WTC11 (cell line): ENCODE measurements at regions of chr19 and their contacts with region 1.

Region 1: DNA sequence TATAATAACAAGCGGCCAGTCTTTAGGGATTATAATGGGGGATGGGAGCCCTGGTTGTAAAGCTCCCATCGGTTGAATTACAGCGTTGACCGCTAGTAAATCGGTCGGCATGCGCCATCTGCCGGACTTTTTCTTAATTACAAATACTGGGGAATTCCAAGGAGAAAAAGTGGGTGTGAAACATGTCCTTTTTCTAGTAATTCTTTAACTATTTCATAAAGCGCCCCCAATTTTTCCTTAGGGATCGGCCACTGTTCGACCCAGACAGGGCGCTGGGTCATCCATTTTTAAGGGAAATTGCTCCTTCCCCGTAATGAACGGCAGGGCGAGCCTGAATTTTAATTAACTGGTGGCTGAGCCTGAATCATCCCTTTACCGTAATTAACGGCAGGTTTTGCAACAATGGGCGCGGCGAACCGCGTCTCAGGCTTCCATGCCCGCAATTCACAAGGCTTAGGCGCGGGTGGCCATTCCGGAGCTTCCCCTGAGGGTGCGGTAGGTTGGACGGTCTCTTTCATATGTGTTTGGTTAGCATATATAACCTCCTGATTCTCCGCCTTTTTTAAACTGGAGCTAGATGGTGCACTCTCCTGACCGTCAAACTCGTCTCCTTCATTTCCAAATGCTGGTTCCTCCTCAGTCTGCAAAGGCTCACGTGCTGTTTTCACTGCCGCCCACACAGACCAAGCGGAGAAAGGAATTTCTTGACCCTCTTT is 30.2 kb upstream of the EVI5L start:
- DNase-seq: peak; percentile 81
- ATAC-seq: peak; percentile 72
- H3K4me3 Mint-ChIP-seq: peak overlapping the region; percentile 64
- H3K27ac Mint-ChIP-seq: no peak overlapping the region
- H3K4me1 Mint-ChIP-seq: peaks cover 21% of the 10 kb centered on the region
- H3K27me3 Mint-ChIP-seq: peaks cover 35% of the 10 kb centered on the region
- CTCF ChIP-seq: peak; percentile 57

Region 2: GRCh38 chr19:7355151-7355820 is 444.5 kb before region 1 on chr19:
- CTCF ChIA-PET with region 1: interaction called, 16 read pairs
- POLR2A ChIA-PET with region 1: interaction called, 4 read pairs
- DNase-seq: no peak
- ATAC-seq: no peak
- H3K4me3 Mint-ChIP-seq: no peak overlapping the region
- H3K27ac Mint-ChIP-seq: no peak overlapping the region
- H3K4me1 Mint-ChIP-seq: no peaks in the 10 kb centered on the region
- H3K27me3 Mint-ChIP-seq: peaks cover 21% of the 10 kb centered on the region
- CTCF ChIP-seq: no peak

Region 3: DNA sequence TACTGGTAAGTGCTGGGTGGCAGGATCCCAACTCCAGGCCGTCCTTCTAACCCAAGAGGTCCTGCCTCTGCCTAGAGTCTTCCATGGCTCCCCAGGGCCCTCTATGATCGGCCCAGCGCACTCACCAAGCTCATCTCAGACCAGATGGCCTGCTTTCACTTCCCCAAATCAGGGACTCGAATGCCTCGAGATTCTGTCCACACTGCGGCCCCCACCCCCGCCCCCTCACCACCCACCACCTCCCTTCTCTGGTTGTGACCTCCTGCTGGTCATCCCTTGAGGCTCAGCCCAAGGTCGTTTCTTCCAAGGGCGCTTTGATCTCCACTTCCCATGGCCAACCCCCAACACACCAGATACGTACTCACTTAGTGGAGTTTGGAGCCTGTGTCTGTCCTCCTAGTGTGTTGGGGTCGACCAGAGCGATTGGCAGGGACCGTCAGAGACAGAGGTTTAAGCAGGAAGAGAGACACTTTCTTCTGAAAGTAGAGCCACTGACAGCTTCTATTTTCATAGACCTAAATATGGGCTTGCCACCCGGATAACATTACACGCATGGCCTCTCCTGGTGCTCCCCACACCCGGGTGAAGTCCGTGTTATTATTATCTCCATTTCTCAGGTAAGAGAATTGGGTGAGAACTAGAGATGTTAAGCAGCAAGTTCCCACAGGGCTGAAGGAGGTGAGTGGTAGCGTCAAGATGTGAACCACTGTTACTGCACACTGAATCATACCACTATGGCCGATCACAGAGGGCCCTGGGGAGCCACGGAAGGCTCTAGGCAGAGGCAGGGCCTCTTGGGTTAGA is 97.9 kb before region 1 on chr19 and contains the start of gene FCER2:
- CTCF ChIA-PET with region 1: interaction called, 12 read pairs
- POLR2A ChIA-PET with region 1: no interaction called
- DNase-seq: no peak
- ATAC-seq: no peak
- H3K4me3 Mint-ChIP-seq: no peak within 1 kb of the TSS
- H3K27ac Mint-ChIP-seq: no peak within 1 kb of the TSS
- H3K4me1 Mint-ChIP-seq: peaks cover 23% of the 10 kb centered on the region
- H3K27me3 Mint-ChIP-seq: peaks cover 18% of the 10 kb centered on the region
- CTCF ChIP-seq: no peak
- total RNA-seq, gene FCER2: 0.37 to 0.48 TPM (median 0.46 TPM) in 3 replicates

Region 4: GRCh38 chr19:7789447-7789846 is 10.4 kb before region 1 on chr19:
- CTCF ChIA-PET with region 1: interaction called, 37 read pairs
- POLR2A ChIA-PET with region 1: no interaction called
- DNase-seq: peak; percentile 87
- ATAC-seq: peak; percentile 75
- H3K4me3 Mint-ChIP-seq: peak overlapping the region; percentile 76
- H3K27ac Mint-ChIP-seq: no peak overlapping the region
- H3K4me1 Mint-ChIP-seq: peaks cover 12% of the 10 kb centered on the region
- H3K27me3 Mint-ChIP-seq: peaks cover 69% of the 10 kb centered on the region
- CTCF ChIP-seq: no peak

Region 5: GRCh38 chr19:7861955-7862951 is 62.5 kb after region 1 on chr19:
- CTCF ChIA-PET with region 1: interaction called, 12 read pairs
- POLR2A ChIA-PET with region 1: no interaction called
- DNase-seq: peak; percentile 99
- ATAC-seq: peak; percentile 71
- H3K4me3 Mint-ChIP-seq: peak overlapping the region; percentile 79
- H3K27ac Mint-ChIP-seq: no peak overlapping the region
- H3K4me1 Mint-ChIP-seq: peaks cover 21% of the 10 kb centered on the region
- H3K27me3 Mint-ChIP-seq: peaks cover 77% of the 10 kb centered on the region
- CTCF ChIP-seq: peak; percentile 22; the same call in 1 of the 2 replicates

Region 6: GRCh38 chr19:7953576-7953975 is 153.8 kb after region 1 on chr19:
- CTCF ChIA-PET with region 1: no interaction called
- POLR2A ChIA-PET with region 1: no interaction called
- DNase-seq: no peak
- ATAC-seq: no peak
- H3K4me3 Mint-ChIP-seq: no peak overlapping the region
- H3K27ac Mint-ChIP-seq: no peak overlapping the region
- H3K4me1 Mint-ChIP-seq: peaks cover 9% of the 10 kb centered on the region
- H3K27me3 Mint-ChIP-seq: no peaks in the 10 kb centered on the region
- CTCF ChIP-seq: no peak